HEK293 (cell line): ENCODE measurements at regions of chr2 and their contacts with region 1.

Region 1: DNA sequence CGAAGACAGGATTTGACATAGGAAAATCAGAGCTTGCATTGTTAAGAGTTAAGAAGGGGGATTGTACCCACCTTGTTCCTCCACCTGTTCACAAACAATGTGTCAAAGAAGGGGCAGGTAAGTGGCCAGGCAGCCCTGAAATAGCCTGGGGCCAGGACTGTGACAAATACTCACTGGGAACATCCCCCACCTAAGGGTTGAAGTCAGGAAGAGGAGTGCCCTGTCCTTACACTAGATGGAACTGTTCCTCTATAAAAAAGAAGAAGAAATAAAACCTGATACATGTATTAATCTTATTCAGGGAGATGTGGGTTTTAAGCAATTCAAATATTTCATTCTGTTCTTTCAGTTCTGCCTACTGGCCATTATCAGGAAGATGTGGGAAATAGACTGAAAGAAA is 41.9 kb downstream of the TACR1 start:
- H3K4me3 ChIP-seq: no peak overlapping the region
- H3K27ac ChIP-seq: no peak overlapping the region
- H3K4me1 ChIP-seq: no peaks in the 10 kb centered on the region
- CTCF ChIP-seq: no peak

Region 2: DNA sequence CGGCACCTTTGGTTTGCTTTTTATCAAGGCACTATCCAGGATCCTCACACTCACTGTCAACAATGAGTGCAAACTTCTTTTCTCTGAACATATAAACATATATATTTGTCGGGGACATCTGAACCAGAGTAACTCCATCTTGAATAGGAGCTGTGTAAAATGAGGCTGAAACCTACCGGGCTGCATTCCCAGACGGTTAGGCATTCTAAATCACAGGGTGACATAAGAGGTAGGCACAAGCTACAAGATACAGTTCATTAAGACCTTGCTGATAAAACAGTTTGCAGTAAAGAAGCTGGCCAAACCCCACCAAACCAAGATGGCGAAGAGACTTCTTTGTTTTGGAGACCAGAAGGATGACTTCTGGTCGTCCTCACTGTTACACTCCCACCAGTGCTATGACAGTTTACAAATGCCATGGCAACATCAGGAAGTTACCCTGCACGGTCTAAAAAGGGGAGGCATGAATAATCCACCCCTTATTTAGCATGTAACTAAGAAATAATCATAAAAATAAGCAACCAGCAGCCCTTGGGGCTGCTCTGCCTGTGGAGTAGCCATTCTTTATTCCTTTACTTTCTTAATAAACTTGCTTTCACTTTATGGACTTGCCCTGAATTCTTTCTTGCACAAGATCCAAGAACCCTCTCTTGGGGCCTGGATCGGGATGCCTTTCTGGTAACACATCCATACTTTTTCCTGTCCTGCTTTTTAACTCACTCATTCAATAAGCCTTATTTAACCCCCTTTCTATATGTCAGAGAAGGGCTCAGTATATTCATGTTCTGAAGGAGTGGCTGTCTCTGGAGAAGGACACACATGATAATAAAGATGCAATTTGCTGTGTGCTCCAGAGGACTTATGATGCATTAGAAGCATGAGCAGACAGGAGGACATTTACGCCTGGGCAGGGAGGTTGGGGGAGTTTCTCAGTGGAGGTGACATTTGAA is 23.5 kb before region 1 on chr2:
- CTCF ChIA-PET with region 1: no interaction called
- POLR2A ChIA-PET with region 1: no interaction called
- H3K4me3 ChIP-seq: no peak overlapping the region
- H3K27ac ChIP-seq: no peak overlapping the region
- H3K4me1 ChIP-seq: no peaks in the 10 kb centered on the region
- CTCF ChIP-seq: no peak

Region 3: GRCh38 chr2:75241696-75242095 is 84.3 kb after region 1 on chr2:
- CTCF ChIA-PET with region 1: interaction called, 11 read pairs
- POLR2A ChIA-PET with region 1: no interaction called
- H3K4me3 ChIP-seq: no peak overlapping the region
- H3K27ac ChIP-seq: no peak overlapping the region
- H3K4me1 ChIP-seq: no peaks in the 10 kb centered on the region
- CTCF ChIP-seq: no peak